Activated naive CD4-positive, alpha-beta T cell treated with anti-CD3 and anti-CD28 coated beads for 36 hours (primary cell): ENCODE measurements at regions of chr2 and their contacts with region 1.

Region 1: DNA sequence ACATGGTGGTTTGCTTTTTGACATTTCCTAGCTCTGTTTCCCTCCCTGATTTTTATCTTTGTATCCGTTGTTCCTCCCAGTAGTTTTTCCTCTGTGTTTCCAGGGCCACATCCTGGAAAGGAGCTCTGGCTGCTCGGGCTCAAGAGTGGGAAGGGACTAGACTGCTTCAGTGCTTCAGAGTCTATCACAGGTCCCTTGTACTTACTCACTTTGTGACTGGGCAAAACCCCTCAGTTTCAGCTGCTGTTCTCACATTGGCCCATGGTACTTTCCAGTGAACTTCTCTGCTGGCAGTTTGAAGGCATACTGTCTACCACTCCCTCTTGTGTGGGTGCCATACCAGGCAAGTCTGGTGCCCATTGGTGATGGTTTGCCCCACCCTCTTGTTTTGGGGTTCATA is 7.5 kb upstream of the STAMBP start:
- DNase-seq: peak; percentile 78
- H3K4me3 Mint-ChIP-seq: no peak overlapping the region
- H3K27ac Mint-ChIP-seq: peak overlapping the region; percentile 79
- H3K4me1 Mint-ChIP-seq: peaks cover 33% of the 10 kb centered on the region
- H3K27me3 Mint-ChIP-seq: no peaks in the 10 kb centered on the region

Region 2: GRCh38 chr2:73759285-73759764 is 61.9 kb before region 1 on chr2:
- CTCF ChIA-PET with region 1: no interaction called
- intact Hi-C with region 1: loop called (anchors 1 kb)
- DNase-seq: no peak
- H3K4me3 Mint-ChIP-seq: no peak overlapping the region
- H3K27ac Mint-ChIP-seq: no peak overlapping the region
- H3K4me1 Mint-ChIP-seq: no peaks in the 10 kb centered on the region
- H3K27me3 Mint-ChIP-seq: no peaks in the 10 kb centered on the region

Region 3: GRCh38 chr2:73779467-73780236 is 41.6 kb before region 1 on chr2 and contains the start of gene DUSP11:
- CTCF ChIA-PET with region 1: interaction called, 3 read pairs
- intact Hi-C with region 1: loop called (anchors 1 kb)
- DNase-seq: peak; percentile 99
- H3K4me3 Mint-ChIP-seq: peak within 1 kb of the TSS; percentile 99
- H3K27ac Mint-ChIP-seq: peak within 1 kb of the TSS; percentile 96
- H3K4me1 Mint-ChIP-seq: peaks cover 24% of the 10 kb centered on the region
- H3K27me3 Mint-ChIP-seq: peaks cover 2% of the 10 kb centered on the region
- total RNA-seq, gene DUSP11: 22.7 to 24.4 TPM